AG04449 (cell line): ENCODE measurements at regions of chr15 and their contacts with region 1.

Region 1: DNA sequence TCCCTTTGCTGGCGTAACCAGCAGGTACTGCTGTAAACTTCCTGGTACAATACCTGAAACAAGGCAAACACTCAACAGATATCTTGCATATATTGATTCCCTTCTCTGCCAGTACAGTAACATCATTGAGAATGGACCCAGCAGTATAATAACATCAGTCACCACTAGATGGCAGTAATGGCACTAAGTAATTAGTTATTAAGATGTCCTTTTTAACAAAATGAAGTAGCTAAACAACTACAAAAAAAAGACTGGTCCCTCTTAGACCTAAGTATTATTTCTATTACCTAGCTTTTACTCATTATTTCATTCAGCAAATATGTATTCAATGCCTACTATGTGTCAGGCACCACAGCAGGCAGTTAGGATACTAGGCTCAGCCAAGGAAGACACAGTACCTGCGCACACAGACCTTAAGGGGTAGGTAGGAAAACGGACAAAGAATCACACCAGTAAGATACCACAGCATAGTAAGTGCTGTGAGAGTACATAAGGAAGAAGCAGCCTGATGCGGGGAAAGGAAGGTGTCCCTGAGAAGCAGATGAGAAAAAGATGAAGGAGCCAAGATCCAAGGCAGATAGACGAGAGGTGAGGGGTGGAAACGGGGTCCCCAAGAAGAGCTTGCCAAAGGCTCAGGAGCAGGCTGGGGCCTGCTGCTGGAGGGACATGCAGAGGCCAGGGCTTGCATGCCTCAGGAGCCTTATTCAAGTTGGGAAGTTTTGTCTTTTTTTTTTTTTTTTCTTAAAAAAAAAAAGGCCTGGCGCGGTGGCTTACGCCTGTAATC is 102.8 kb upstream of the CHD2 start:
- DNase-seq: peak; percentile 38
- H3K4me3 ChIP-seq: no peak overlapping the region
- CTCF ChIP-seq: peak; percentile 44

Region 2: DNA sequence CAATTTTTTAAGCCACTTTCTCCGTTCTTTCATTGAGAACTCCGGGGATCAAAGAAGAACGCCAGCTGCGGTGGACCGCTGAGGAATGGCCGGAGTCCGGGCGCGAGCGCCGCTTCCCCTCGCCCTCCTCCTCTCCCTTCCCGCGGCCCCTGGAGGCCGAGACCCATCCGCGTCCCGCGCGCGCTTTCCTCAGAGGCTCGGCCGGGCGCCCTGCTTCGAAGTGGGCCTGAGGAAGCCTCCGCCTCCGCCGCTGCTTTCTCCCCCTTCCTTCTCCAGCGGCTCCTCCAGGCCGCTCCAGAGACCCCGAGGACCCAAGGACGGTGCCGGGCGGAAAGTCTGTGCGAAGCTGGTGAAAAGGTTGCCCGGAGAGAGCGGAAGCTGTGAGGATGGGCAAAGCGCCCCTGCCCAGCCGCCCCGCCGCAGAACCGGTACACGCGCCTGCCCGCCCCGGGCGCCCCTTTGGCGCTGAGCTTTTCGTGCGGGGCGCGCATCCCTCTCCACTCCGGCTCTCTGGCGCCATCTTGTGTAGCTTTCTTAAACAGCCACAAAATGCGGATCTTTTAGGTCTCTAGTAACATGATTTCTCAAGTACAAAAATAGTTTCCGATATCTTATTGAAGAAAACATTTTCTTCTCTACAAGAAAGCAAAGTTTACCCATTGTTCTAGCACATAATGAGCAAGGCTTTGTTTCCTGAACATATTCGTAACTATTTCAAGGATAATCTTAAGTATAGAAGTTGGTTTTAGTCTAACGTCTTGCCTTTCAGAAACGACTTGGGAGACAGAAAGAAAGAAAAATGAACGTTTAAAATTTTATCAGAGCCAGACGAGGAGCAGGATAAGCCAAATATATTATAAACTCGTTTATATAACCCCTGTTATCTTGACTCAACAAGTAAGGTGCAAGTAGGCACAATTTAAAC is 82.6 kb before region 1 on chr15:
- CTCF ChIA-PET with region 1: no interaction called
- POLR2A ChIA-PET with region 1: no interaction called
- DNase-seq: no peak
- H3K4me3 ChIP-seq: peak overlapping the region; percentile 63
- CTCF ChIP-seq: peak; percentile 77

Region 3: DNA sequence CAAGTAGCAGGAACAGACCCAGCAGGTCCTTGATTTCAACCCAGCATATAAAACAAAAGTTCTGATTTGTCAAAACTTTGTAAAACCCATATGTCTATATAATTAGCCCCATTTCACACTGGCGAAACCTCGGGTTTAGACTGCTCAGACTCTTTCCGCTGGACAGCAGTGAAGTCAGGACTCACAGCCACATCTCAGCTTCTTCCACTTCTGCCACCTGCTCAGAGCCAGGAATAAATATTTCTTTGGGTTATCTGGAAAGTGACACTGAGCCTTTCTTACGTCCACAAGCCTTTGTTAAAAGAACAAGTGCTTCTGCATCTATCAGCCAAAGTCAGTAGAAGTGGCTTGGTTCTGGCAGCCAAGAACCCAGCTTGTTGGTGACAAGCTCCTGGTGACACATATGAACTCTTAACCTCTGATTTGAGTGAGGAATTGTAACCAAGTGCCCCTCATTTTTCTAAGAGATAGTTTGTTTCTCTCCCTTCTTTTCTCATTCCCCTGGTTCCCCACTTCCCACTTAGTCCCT is 15.4 kb before region 1 on chr15:
- CTCF ChIA-PET with region 1: interaction called, 14 read pairs
- POLR2A ChIA-PET with region 1: no interaction called
- DNase-seq: no peak
- H3K4me3 ChIP-seq: no peak overlapping the region
- CTCF ChIP-seq: no peak

Region 4: DNA sequence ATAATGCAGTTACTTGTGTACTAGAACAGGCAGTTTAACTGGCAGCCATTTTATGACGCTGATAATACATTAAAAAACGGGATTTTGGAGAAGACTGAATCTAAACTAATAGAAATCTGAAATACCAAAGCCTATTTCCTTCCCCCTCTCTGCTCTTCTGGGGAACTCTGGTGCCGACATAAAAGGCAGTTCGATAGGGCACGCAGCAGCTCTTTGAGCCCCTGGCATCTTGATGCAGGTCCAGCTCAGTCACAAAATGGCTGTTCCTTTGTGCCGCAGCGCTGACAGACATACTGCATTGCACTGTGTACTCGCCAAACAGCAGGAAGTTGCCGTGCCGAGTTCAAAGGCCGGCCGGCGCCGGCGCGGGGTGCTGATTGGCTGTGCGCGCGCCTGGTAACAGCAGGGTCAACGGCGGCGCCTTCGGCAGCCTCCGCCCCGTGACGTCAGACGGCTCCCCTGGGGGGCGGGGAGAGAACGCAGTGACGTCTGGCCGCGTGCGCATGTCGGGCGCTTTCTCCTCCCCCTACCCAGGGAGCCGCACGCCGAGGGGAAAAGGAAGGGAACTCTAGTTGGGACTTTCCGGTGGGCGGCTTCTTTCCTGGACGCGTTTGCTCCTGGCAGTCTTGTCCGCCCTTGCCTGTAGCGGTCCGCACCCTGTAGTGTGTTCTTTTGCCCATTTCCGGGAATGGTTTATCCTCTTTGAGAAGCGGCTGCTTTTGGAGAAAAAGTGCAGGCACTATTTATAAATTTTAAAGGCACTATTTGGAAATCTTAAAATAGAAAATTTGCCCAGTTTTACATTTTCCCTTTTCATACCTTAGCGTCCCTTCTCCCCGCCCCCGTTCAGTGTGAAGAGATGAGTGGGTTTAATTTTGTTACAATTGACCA is 106.8 kb after region 1 on chr15:
- CTCF ChIA-PET with region 1: interaction called, 50 read pairs
- POLR2A ChIA-PET with region 1: interaction called, 14 read pairs
- DNase-seq: peak; percentile 88
- H3K4me3 ChIP-seq: peak overlapping the region; percentile 66
- CTCF ChIP-seq: no peak

Region 5: GRCh38 chr15:92938387-92938786 is 141.0 kb after region 1 on chr15:
- CTCF ChIA-PET with region 1: interaction called, 31 read pairs
- POLR2A ChIA-PET with region 1: no interaction called
- DNase-seq: no peak
- H3K4me3 ChIP-seq: no peak overlapping the region
- CTCF ChIP-seq: no peak

Region 6: DNA sequence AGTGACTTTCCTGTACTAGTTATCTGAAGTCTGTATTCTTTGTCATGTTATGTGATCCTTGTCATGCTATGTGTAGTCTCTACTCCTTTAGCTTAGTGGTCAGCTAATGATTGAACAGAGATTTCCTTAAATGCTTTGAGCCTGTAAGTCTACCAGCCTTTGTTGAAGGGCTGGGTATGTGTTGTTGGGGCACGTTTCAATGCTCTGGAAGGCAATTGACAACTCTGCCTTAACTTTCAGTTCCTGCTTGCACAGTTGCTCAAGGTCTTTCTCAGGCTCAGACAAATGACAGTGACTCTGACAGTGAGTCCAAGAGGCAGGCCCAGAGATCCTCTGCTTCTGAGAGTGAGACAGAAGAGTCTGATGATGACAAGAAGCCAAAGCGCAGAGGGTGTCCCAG is 192.1 kb after region 1 on chr15:
- CTCF ChIA-PET with region 1: interaction called, 11 read pairs
- POLR2A ChIA-PET with region 1: no interaction called
- DNase-seq: no peak
- H3K4me3 ChIP-seq: no peak overlapping the region
- CTCF ChIP-seq: no peak

Region 7: DNA sequence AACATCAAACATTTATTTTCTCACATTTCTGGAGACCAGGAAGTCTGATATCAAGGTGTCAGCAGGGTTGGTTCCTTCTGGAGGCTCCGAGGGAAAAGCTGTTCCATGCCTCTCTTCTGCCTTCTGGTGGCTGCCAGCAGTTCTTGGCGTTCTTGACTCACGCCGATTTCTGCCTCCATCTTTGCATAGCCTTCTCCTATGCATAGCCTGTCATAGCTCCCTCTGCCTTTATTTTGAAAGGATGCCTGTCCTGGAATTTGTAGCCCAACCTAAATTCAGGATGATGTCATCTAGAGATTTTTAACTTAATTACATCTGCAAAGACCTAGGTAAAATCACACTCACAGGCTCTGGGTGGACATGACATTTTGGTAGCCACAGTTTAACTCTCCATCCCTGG is 221.2 kb after region 1 on chr15:
- CTCF ChIA-PET with region 1: interaction called, 13 read pairs
- POLR2A ChIA-PET with region 1: no interaction called
- DNase-seq: no peak
- H3K4me3 ChIP-seq: no peak overlapping the region
- CTCF ChIP-seq: no peak